IMR-90 (cell line): ENCODE measurements at regions of chr16 and their contacts with region 1.

Region 1: DNA sequence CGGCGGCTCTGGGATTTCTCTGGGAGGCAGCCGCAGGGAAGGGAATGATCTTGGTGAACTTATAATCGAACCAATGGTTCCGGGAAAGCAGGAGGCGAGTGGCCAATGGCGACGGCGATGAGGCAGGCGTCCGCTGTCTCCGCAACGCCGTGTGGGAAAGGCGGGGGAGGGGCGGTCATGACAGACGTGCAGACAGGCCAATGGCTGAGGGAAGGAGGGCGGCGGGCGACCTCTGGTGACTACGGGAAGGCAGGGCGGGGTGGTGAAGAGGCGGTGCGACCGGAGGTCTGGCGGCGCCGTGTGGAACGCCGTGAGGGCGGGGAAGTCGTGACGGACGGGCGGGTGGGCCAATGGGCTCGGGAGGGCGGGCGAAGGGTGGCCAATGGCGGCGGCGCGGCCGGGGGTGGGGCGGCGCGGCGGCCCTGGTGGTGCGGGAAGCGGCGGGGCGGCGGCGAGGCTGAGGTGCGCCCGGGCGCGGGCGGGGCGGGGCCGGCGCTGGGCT is at the start of gene RAB40C:
- DNase-seq: peak; percentile 97
- ATAC-seq: peak; percentile 87
- H3K4me3 ChIP-seq: peak within 1 kb of the TSS; percentile 98
- H3K27ac ChIP-seq: peak within 1 kb of the TSS; percentile 92
- H3K4me1 ChIP-seq: peaks cover 18% of the 10 kb centered on the region
- H3K27me3 ChIP-seq: no peaks in the 10 kb centered on the region
- CTCF ChIP-seq: peak; percentile 29
- POLR2A ChIP-seq: 0 out of 2 replicates have a peak, but pooled peaks have one; percentile 16
- RAD21 ChIP-seq: no peak
- total RNA-seq, gene RAB40C: 6.8 and 6.9 TPM in 2 replicates

Region 2: GRCh38 chr16:401468-402348 is 188.0 kb before region 1 on chr16 and contains the start of gene DECR2:
- CTCF ChIA-PET with region 1: no interaction called
- POLR2A ChIA-PET with region 1: no interaction called
- dilution Hi-C with region 1: no loop called
- in situ Hi-C with region 1: no loop called
- intact Hi-C with region 1: loop called (anchors 2 kb)
- DNase-seq: peak; percentile 85
- ATAC-seq: peak; percentile 88
- H3K4me3 ChIP-seq: peak within 1 kb of the TSS; percentile 95
- H3K27ac ChIP-seq: peak within 1 kb of the TSS; percentile 90
- H3K4me1 ChIP-seq: peaks cover 4% of the 10 kb centered on the region
- H3K27me3 ChIP-seq: no peaks in the 10 kb centered on the region
- CTCF ChIP-seq: peak; percentile 53
- POLR2A ChIP-seq: peak; percentile 50; the same call in 1 of the 2 replicates
- RAD21 ChIP-seq: peak; percentile 59
- total RNA-seq, gene DECR2: 3.9 TPM in 2 replicates

Region 3: DNA sequence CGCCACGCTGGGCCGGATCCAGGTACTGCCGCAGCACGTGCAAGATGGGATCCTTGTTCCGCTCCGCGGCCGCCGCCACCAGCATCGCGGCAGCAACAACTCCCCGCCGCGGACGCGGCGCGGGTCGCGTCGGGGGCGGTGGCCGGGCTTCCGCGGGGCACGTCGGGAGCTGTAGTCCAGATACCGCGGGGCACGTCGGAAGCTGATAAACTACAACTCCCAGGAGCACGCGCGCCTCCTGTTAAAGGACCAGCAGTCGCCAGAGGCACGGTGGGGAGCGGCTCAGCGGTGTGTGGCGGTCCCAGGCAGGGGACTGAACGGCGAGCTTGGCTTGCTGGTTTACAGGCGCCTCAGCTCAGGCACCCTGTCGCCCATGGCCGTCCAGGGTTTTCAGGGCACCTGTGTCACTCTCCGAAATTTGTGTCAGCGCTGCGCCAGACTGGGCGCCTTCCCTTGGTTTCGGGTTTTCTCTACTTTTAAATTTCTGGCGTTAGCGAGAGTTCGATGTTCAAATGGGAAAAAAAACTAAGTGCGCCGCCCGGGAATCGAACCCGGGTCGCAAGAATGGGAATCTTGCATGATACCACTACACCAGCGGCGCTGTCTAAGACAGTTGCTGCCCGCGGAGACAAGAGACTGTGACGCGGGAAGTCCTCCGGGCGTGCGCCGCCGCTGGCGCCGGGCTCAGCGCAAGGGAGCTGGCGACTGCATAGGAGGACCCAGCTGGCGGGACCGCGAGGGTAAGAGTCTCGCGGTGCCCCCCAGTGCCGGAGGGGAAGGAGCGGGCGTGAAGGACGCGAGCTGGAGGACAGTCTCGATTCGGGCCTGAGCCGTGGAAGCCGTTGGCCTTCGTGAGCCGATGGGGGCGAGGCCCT is 46.7 kb after region 1 on chr16 and contains the start of gene METTL26:
- CTCF ChIA-PET with region 1: interaction called, 3 read pairs
- POLR2A ChIA-PET with region 1: no interaction called
- dilution Hi-C with region 1: no loop called
- in situ Hi-C with region 1: no loop called
- intact Hi-C with region 1: loop called (anchors 2 kb)
- DNase-seq: peak; percentile 91
- ATAC-seq: peak; percentile 86
- H3K4me3 ChIP-seq: peak within 1 kb of the TSS; percentile 97
- H3K27ac ChIP-seq: peak within 1 kb of the TSS; percentile 94
- H3K4me1 ChIP-seq: peaks cover 11% of the 10 kb centered on the region
- H3K27me3 ChIP-seq: no peaks in the 10 kb centered on the region
- CTCF ChIP-seq: peak; percentile 12; the same call in 1 of the 2 replicates
- POLR2A ChIP-seq: peak; percentile 69; the same call in 1 of the 2 replicates
- RAD21 ChIP-seq: peak; percentile 22
- total RNA-seq, gene METTL26: 40.8 and 46.8 TPM in 2 replicates

Region 4: DNA sequence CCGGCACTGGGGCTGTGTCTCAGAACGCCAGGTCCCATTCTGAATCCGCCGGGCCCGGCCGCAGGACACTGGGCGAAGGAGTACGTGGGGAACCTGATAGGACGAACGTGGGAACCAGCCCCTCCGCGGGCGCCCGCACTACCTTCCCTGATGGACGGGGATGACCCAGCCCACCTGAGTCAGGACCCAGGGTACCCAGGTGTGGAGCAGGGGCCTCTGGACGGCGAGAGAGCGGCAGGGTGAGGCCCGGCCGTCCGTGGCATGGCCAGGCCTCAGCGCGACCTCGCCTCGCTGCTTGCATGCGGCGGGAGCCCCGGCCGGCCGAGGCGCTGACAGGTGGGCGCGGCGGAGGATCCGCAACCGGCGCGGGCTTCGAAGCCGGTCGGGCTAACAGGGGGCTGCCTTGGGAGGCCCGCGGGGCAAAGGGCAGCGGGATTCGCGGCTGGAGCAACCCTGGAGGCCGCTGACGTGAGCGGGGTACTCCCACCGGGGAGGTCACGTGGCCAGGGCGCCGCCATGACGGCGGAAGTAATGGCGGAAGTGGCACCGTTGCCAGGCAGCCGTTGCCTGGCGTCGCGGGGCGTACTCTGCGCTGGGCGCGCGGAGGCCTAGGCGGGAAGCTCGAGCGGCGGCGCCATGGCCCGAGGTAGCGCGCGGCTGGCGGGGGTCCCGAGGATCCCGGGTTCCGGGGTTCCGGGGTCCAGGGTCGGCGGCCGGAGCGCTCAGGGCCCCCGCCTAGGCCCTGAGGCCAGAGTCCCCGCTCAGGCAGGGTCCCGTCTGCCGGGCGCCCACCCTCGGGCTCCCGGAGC is 59.3 kb after region 1 on chr16 and contains the start of gene WDR90:
- CTCF ChIA-PET with region 1: no interaction called
- POLR2A ChIA-PET with region 1: interaction called, 20 read pairs
- dilution Hi-C with region 1: no loop called
- in situ Hi-C with region 1: no loop called
- intact Hi-C with region 1: no loop called
- DNase-seq: peak; percentile 86
- ATAC-seq: peak; percentile 88
- H3K4me3 ChIP-seq: peak within 1 kb of the TSS; percentile 59
- H3K27ac ChIP-seq: peak within 1 kb of the TSS; percentile 85
- H3K4me1 ChIP-seq: peaks cover 14% of the 10 kb centered on the region
- H3K27me3 ChIP-seq: no peaks in the 10 kb centered on the region
- CTCF ChIP-seq: no peak
- POLR2A ChIP-seq: peak; percentile 52
- RAD21 ChIP-seq: no peak
- total RNA-seq, gene WDR90: 1.4 and 1.7 TPM in 2 replicates